ENCODE measurements at regions of chr7 and their contacts with region 1.

Region 1: GRCh38 chr7:30740424-30741181 is 11.3 kb upstream of the INMT start:
- DNase-seq: peak; percentile 82
- H3K4me3 Mint-ChIP-seq: no peak overlapping the region
- H3K27ac Mint-ChIP-seq: no peak overlapping the region
- H3K4me1 Mint-ChIP-seq: peaks cover 38% of the 10 kb centered on the region
- H3K27me3 Mint-ChIP-seq: no peaks in the 10 kb centered on the region

Region 2: DNA sequence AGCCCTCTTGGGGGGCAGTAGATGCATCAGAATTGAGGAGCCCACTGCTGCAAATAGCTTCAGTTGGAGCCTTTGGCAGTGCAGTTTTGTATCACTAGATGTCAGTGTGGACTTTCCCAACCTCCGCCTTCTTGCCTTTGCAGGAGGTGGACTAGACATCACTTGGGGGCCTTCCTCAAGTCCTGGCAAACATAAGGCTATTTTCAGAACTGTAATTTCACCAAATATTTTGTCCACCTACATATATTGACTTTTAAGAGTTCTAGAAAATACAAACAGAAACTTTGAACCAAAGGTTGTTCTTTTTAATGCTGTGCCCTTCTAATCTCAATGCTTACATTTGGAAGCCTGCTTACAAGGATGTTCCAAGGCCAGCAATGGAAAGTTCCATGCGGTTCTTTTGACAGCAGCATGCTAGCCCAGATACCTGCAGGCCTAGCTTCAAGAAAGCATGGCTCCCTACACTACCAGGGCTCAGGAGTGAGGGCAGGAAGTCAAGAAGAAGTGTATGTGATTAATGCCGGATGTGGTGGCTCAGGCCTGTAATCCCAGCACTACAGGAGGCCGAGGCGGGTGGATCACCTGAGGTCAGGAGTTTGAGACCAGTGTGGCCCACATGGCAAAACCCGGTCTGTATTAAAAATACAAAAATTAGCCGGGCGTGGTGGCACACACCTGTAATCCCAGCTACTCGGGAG is 464.3 kb before region 1 on chr7:
- CTCF ChIA-PET with region 1: no interaction called
- POLR2A ChIA-PET with region 1: no interaction called
- intact Hi-C with region 1: loop called (anchors 2 kb)
- DNase-seq: peak; percentile 61
- H3K4me3 Mint-ChIP-seq: no peak overlapping the region
- H3K27ac Mint-ChIP-seq: no peak overlapping the region
- H3K4me1 Mint-ChIP-seq: peaks cover 5% of the 10 kb centered on the region
- H3K27me3 Mint-ChIP-seq: no peaks in the 10 kb centered on the region

Region 3: DNA sequence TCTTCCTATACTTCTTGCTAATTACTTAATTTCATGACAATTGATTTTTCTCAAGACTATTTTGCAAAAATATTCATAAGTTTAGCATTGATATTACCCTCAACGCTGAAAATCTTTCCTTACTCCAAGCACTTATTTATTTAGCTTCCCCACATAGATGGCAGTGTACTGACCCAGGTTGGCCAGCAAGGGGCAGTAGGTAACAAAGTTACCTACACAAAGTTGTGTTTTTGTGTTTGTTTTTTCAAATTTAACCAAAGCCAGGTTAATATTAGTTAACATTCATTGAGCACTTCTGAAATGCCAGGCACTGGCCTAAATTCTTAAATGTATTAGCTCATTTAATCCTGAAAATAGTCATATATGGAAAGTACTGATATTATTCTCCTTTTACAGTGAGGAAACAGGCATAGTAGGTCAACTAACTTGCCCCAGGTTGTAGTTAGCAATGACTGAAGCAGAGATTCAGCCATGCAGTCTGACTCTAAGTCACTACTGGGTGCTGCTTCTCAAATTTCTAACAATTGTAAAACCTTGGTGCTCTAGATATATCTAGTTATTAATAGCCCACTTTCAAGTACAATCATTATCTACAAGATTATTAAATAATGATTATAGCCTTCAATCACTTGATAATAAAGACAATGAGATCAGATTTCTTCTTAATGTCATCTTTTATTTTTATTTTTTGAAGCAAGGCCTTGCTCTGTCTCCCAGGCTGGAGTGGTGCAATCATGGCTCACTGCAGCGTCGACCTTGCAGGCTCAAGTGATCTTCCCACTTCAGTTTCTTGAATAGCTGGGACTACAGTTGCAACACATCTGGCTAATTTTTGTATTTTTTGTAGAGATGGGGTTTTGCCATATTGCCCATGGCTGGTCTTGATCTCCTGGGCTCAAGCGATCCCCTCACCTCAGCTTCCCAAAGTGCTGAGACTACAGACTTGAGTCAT is 230.2 kb before region 1 on chr7:
- CTCF ChIA-PET with region 1: interaction called, 6 read pairs
- POLR2A ChIA-PET with region 1: no interaction called
- intact Hi-C with region 1: loop called (anchors 1 kb)
- DNase-seq: peak; percentile 46
- H3K4me3 Mint-ChIP-seq: no peak overlapping the region
- H3K27ac Mint-ChIP-seq: no peak overlapping the region
- H3K4me1 Mint-ChIP-seq: peaks cover 9% of the 10 kb centered on the region
- H3K27me3 Mint-ChIP-seq: no peaks in the 10 kb centered on the region

Region 4: DNA sequence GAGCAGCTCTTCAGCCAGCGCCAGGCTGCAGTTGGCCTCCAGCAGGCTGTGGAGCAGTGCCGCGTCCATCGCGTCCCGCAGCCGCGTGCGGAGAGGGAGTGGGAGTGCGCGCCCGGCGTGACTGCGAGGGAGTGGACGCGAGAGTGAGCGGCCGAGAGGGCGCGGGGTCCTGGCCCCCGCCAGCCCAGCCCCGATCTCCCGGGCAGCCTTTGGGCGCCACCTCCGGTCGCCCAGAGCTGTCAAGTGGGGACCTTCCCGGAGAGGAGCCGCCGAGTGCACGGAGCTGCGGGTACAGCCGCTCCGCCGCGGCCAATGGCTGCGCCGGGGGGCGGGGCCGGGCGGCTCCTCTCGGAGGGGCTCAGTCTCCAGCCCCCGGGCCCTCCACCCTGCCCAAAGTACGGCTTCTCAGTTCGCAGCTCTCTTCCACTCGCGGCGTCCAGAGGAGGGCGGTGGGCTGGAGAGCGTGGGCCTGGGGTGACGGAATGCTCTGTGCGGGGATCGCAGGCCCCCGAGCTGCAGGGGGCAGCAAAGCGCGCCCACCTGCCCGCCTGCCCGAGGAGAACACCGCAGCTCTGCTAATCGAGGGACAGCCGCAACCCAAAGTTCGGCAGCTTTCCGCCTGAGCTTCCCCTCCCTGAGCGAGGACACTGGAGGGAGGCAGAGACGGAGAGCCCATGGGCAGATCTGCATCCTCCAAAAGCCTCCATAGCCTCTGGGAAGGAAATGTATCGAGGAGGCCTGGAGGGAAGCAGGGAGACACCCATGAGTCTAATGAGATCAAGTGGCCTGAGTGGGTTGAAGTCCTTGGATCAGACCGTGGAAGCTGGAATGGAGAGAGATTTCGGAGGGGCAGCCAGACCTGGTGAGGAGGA is 58.2 kb before region 1 on chr7 and contains the start of gene CRHR2:
- CTCF ChIA-PET with region 1: interaction called, 12 read pairs
- POLR2A ChIA-PET with region 1: interaction called, 3 read pairs
- intact Hi-C with region 1: loop called (anchors 5 kb)
- DNase-seq: peak; percentile 48
- H3K4me3 Mint-ChIP-seq: peak within 1 kb of the TSS; percentile 47
- H3K27ac Mint-ChIP-seq: no peak within 1 kb of the TSS
- H3K4me1 Mint-ChIP-seq: peaks cover 11% of the 10 kb centered on the region
- H3K27me3 Mint-ChIP-seq: peaks cover 51% of the 10 kb centered on the region
- total RNA-seq, gene CRHR2: 0.07 TPM in 1 of 2 experiments, not detected in the other

Region 5: GRCh38 chr7:30721211-30721610 is 19.4 kb before region 1 on chr7:
- CTCF ChIA-PET with region 1: interaction called, 48 read pairs
- POLR2A ChIA-PET with region 1: no interaction called
- intact Hi-C with region 1: no loop called
- DNase-seq: no peak
- H3K4me3 Mint-ChIP-seq: no peak overlapping the region
- H3K27ac Mint-ChIP-seq: no peak overlapping the region
- H3K4me1 Mint-ChIP-seq: peaks cover 7% of the 10 kb centered on the region
- H3K27me3 Mint-ChIP-seq: no peaks in the 10 kb centered on the region

Region 6: GRCh38 chr7:30771174-30771879 is 30.7 kb after region 1 on chr7 and contains the start of gene MINDY4:
- CTCF ChIA-PET with region 1: interaction called, 10 read pairs
- POLR2A ChIA-PET with region 1: no interaction called
- intact Hi-C with region 1: no loop called
- DNase-seq: peak; percentile 84
- H3K4me3 Mint-ChIP-seq: peak within 1 kb of the TSS; percentile 81
- H3K27ac Mint-ChIP-seq: peak within 1 kb of the TSS; percentile 57
- H3K4me1 Mint-ChIP-seq: peaks cover 3% of the 10 kb centered on the region
- H3K27me3 Mint-ChIP-seq: no peaks in the 10 kb centered on the region
- total RNA-seq, gene MINDY4: 1.1 to 1.6 TPM

Region 7: GRCh38 chr7:31096877-31097258 is 356.3 kb after region 1 on chr7:
- CTCF ChIA-PET with region 1: no interaction called
- POLR2A ChIA-PET with region 1: no interaction called
- intact Hi-C with region 1: no loop called
- DNase-seq: no peak
- H3K4me3 Mint-ChIP-seq: no peak overlapping the region
- H3K27ac Mint-ChIP-seq: no peak overlapping the region
- H3K4me1 Mint-ChIP-seq: no peaks in the 10 kb centered on the region
- H3K27me3 Mint-ChIP-seq: no peaks in the 10 kb centered on the region